ENCODE measurements at regions of chr14 and their contacts with region 1.

Region 1: GRCh38 chr14:90399541-90400444 is 3.0 kb downstream of the CALM1 start:
- DNase-seq: peak; percentile 61
- H3K4me3 ChIP-seq: peak overlapping the region; percentile 97
- H3K27ac ChIP-seq: peak overlapping the region; percentile 40
- H3K27me3 ChIP-seq: no peaks in the 10 kb centered on the region
- CTCF ChIP-seq: peak; percentile 99

Region 2: DNA sequence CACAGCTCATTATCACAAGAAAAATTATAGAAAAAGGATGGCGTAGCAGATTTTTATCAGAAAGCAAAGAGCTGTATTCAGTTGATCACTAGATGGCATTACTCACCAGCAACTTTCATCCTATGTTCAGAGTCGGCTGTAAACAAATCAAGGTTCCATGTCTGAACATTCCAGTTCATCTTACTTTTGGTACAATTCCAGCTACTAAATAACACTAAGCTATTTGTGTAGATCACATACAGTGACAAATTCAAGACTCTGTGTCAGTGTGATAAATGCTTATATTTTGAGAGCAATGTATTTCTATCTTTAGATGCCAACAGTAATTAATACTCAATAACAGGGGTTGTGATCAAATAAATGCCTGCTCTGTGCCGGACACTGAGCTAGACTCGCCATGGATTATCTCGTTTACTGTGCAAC is 98.1 kb before region 1 on chr14:
- CTCF ChIA-PET with region 1: interaction called, 20 read pairs
- POLR2A ChIA-PET with region 1: interaction called, 5 read pairs
- DNase-seq: peak; percentile 41
- H3K4me3 ChIP-seq: no peak overlapping the region
- H3K27ac ChIP-seq: no peak overlapping the region
- H3K27me3 ChIP-seq: no peaks in the 10 kb centered on the region
- CTCF ChIP-seq: peak; percentile 55

Region 3: GRCh38 chr14:90383075-90383730 is 16.6 kb before region 1 on chr14:
- CTCF ChIA-PET with region 1: interaction called, 8 read pairs
- POLR2A ChIA-PET with region 1: interaction called, 25 read pairs
- DNase-seq: peak; percentile 100
- H3K4me3 ChIP-seq: peak overlapping the region; percentile 70
- H3K27ac ChIP-seq: peak overlapping the region; percentile 100
- H3K27me3 ChIP-seq: no peaks in the 10 kb centered on the region
- CTCF ChIP-seq: peak; percentile 23; the same call in 1 of the 2 replicates

Region 4: GRCh38 chr14:90388437-90388836 is 11.4 kb before region 1 on chr14:
- CTCF ChIA-PET with region 1: interaction called, 8 read pairs
- POLR2A ChIA-PET with region 1: interaction called, 25 read pairs
- DNase-seq: peak; percentile 57
- H3K4me3 ChIP-seq: no peak overlapping the region
- H3K27ac ChIP-seq: peak overlapping the region; percentile 65
- H3K27me3 ChIP-seq: no peaks in the 10 kb centered on the region
- CTCF ChIP-seq: no peak

Region 5: GRCh38 chr14:90416720-90417119 is 16.9 kb after region 1 on chr14:
- CTCF ChIA-PET with region 1: interaction called, 14 read pairs
- POLR2A ChIA-PET with region 1: interaction called, 6 read pairs
- DNase-seq: no peak
- H3K4me3 ChIP-seq: no peak overlapping the region
- H3K27ac ChIP-seq: no peak overlapping the region
- H3K27me3 ChIP-seq: no peaks in the 10 kb centered on the region
- CTCF ChIP-seq: no peak

Region 6: DNA sequence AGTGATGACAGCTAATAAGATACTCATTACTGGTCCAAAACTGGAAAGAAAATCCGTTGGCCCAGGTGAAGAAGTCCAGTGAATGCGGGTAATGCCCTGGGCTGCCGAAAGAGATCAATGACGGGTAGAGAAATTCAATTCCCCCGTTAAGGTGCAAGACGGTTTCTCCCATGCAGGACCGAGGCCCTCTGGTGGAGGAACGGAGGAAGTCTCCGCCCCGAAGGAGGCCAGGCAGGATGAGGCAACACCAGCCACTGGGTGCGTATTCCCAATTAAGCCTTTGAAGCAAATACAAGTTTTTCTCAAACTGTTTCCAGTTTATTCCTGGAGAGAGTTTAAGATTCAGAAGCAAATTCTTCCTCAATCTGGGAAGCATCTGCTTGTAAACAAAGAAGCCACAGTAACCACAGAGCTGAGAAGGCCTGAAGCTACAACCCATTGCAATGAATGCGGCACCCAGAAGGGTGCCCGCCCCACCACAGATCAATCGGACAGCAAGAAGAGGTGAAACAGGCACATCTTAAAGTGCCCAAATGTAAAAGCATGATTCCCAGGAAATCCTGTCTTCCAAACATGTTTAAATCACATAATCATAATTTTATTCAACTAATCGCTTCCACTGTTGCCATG is 297.9 kb after region 1 on chr14:
- CTCF ChIA-PET with region 1: interaction called, 61 read pairs
- POLR2A ChIA-PET with region 1: interaction called, 4 read pairs
- DNase-seq: no peak
- H3K4me3 ChIP-seq: no peak overlapping the region
- H3K27ac ChIP-seq: no peak overlapping the region
- H3K27me3 ChIP-seq: no peaks in the 10 kb centered on the region
- CTCF ChIP-seq: peak; percentile 96